Testis (tissue), 5 donors: ENCODE measurements at regions of chr1 and their contacts with region 1.

Region 1: GRCh38 chr1:229625915-229626831 is at the starts of genes TAF5L and URB2:
- DNase-seq: peak; percentile 88
- H3K4me3 ChIP-seq: peak within 1 kb of the TSS; percentile 87 to 90
- H3K27ac ChIP-seq: peak within 1 kb of the TSS; percentile 12 to 89
- H3K4me1 ChIP-seq: peaks cover 18% of the 10 kb centered on the region
- H3K27me3 ChIP-seq: no peaks in the 10 kb centered on the region
- CTCF ChIP-seq: peak in 1 of 3 experiments; percentile 1
- POLR2A ChIP-seq: no peak
- total RNA-seq, gene TAF5L: 18.4 to 24.6 TPM
- total RNA-seq, gene URB2: 18.7 to 18.8 TPM

Region 2: GRCh38 chr1:229558571-229559335 is 67.4 kb before region 1 on chr1 and contains the start of gene ABCB10:
- intact Hi-C with region 1: loop called (anchors 5 kb)
- DNase-seq: peak; percentile 97
- H3K4me3 ChIP-seq: peak within 1 kb of the TSS; percentile 79 to 90
- H3K27ac ChIP-seq: peak within 1 kb of the TSS; percentile 73 to 91
- H3K4me1 ChIP-seq: peaks cover 7% of the 10 kb centered on the region
- H3K27me3 ChIP-seq: no peaks in the 10 kb centered on the region
- CTCF ChIP-seq: peak; percentile 73 to 82 (median 75)
- POLR2A ChIP-seq: no peak
- total RNA-seq, gene ABCB10: 9.8 to 12.1 TPM

Region 3: GRCh38 chr1:229665912-229666558 is 39.9 kb after region 1 on chr1:
- intact Hi-C with region 1: no loop called
- DNase-seq: no peak
- H3K4me3 ChIP-seq: no peak overlapping the region
- H3K27ac ChIP-seq: no peak overlapping the region
- H3K4me1 ChIP-seq: peaks cover 14% of the 10 kb centered on the region
- H3K27me3 ChIP-seq: no peaks in the 10 kb centered on the region
- CTCF ChIP-seq: no peak
- POLR2A ChIP-seq: no peak

Region 4: GRCh38 chr1:229689904-229690303 is 63.7 kb after region 1 on chr1:
- intact Hi-C with region 1: no loop called
- DNase-seq: no peak
- H3K4me3 ChIP-seq: no peak overlapping the region
- H3K27ac ChIP-seq: no peak overlapping the region
- H3K4me1 ChIP-seq: peaks cover 7% of the 10 kb centered on the region
- H3K27me3 ChIP-seq: no peaks in the 10 kb centered on the region
- CTCF ChIP-seq: no peak
- POLR2A ChIP-seq: no peak

Region 5: DNA sequence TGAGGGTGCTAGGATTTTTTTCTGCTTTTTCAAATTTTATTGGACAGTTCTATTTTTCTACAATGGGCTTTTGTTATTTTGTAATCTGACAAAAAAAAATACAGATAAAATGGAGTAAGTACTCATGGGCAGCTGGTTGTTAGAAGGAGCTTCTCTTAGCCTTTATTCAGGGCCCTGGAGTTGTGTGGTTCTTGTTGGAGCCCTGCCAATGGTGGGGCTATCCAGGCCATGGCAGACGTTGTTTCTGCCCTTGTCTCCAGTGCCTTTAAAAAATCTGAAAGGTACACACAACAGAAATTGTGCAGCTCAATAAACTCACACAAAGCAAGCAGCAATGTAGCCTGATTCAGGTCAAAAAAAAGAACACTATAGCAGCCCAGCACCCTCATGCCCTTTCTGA is 287.3 kb after region 1 on chr1:
- intact Hi-C with region 1: no loop called
- DNase-seq: no peak
- H3K4me3 ChIP-seq: no peak overlapping the region
- H3K27ac ChIP-seq: no peak overlapping the region
- H3K4me1 ChIP-seq: no peaks in the 10 kb centered on the region
- H3K27me3 ChIP-seq: no peaks in the 10 kb centered on the region
- CTCF ChIP-seq: no peak
- POLR2A ChIP-seq: no peak